Ascending aorta (tissue), 2 donors: ENCODE measurements at regions of chr1 and their contacts with region 1.

Region 1: GRCh38 chr1:22451702-22452474 is at the start of gene ZBTB40:
- DNase-seq: peak; percentile 84 to 98
- H3K4me3 ChIP-seq: peak within 1 kb of the TSS; percentile 98 to 99
- H3K27ac ChIP-seq: peak within 1 kb of the TSS; percentile 96 to 98
- H3K4me1 ChIP-seq: peaks cover 4 to 17% of the 10 kb centered on the region in 2 donors
- H3K27me3 ChIP-seq: no peaks in the 10 kb centered on the region
- CTCF ChIP-seq: no peak
- total RNA-seq, gene ZBTB40: 13.0 TPM

Region 2: DNA sequence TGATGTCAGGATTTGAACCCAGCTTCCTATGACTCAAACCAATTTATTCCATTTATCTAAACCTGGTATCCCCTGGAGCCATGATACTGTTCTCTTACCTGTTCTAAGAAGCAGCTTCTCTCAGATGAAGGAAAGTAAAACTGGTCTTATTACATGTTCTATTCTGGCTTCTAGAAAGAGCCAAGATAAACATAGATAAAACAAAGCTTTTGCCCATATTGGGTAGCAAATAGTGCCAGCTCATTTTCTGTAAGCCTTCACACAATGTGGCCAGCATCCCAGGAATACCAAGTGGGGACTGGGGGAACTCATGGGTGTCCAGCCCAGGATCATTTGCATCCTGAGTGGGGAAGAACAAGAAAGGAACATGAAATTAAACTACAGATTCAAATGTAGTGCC is 57.9 kb after region 1 on chr1:
- intact Hi-C with region 1: loop called (anchors 2 kb)
- DNase-seq: no peak
- H3K4me3 ChIP-seq: peak overlapping the region; percentile 14 to 60
- H3K27ac ChIP-seq: peak overlapping the region; percentile 78
- H3K4me1 ChIP-seq: peaks cover 3 to 10% of the 10 kb centered on the region in 2 donors
- H3K27me3 ChIP-seq: no peaks in the 10 kb centered on the region
- CTCF ChIP-seq: no peak

Region 3: GRCh38 chr1:22529901-22530621 is 78.2 kb after region 1 on chr1:
- intact Hi-C with region 1: loop called (anchors 2 kb)
- DNase-seq: peak in 1 of 2 donors; percentile 83
- H3K4me3 ChIP-seq: no peak overlapping the region
- H3K27ac ChIP-seq: peak overlapping the region; percentile 78 to 83
- H3K4me1 ChIP-seq: peaks cover 0 to 21% of the 10 kb centered on the region in 2 donors
- H3K27me3 ChIP-seq: no peaks in the 10 kb centered on the region
- CTCF ChIP-seq: no peak